ENCODE measurements at regions of chr7 and their contacts with region 1.

Region 1: DNA sequence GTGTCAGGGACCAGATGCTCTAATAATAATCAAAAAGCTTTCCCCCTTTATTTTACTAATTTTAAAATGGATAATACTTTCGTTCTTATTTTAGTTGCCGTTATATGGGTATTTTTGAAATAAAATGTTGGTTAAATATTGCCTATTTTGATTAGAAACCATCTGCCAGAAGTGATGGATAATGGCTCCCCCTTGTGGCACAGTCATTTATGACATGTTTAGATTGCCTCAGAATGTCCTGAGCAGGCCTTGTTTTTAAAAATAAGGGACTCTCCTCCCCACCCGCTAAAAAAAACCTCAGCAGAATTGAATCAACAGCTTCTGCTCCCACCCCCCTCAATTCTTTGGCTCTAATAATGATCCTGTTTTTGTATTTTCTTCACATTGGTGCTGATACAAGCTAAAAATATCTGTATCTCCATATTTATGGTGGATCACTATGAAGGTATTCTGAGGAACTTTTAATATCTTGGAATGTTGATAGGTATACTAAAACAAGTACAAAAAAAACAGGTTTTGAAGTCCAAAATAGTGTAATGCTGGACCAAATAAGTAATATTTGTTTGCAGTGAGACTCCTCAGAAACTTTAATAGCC is 38.8 kb downstream of the TMEM60 start:
- DNase-seq: peak in 1 of 2 donors; percentile 83
- H3K4me3 ChIP-seq: no peak overlapping the region
- CTCF ChIP-seq: peak in 1 of 3 donors; percentile 49
- POLR2A ChIP-seq: no peak

Region 2: GRCh38 chr7:77657427-77658224 is 101.8 kb before region 1 on chr7:
- intact Hi-C with region 1: loop called (anchors 5 kb)
- DNase-seq: no peak
- H3K4me3 ChIP-seq: no peak overlapping the region
- CTCF ChIP-seq: no peak
- POLR2A ChIP-seq: no peak